ENCODE measurements at regions of chr22 and their contacts with region 1.

Region 1: GRCh38 chr22:19629720-19630419 is 84.4 kb upstream of the SEPTIN5 start:
- H3K4me3 Mint-ChIP-seq: no peak overlapping the region
- H3K27ac Mint-ChIP-seq: no peak overlapping the region
- H3K4me1 Mint-ChIP-seq: peaks cover 5% of the 10 kb centered on the region
- H3K27me3 Mint-ChIP-seq: peaks cover 8% of the 10 kb centered on the region

Region 2: DNA sequence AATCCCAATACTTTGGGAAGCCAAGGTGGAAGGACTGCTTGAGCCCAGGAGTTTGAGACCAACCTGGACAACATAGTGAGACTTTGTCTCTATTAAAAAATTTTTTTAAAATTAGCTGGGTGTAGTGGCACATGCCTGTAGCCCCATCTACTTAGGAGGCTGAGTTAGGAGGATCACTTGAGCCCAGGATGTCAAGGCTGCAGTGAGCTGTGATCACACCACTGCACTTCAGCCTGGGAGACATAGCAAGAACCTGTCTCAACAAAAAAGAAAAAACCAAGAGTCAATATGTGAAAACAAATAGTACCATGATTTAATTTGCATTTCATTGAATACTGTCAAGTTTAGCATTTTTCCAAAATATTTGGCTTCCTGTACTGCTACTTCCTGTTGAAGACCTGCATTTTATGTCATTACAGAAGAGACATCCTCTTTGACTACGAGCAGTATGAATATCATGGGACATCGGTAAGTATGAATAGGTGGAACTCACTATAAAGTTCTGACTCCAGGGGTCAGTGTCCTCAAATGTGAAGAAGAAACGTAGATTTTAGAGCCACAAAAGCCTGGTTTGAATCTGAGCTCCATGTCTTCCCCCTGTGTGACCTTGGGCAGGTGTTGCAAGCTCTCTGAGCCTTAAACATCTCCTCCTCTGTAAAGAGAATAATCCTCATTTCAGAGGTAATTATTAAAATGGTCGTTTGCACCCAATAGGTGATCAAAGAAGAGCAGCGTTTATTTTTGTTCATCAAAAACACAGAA is 134.1 kb before region 1 on chr22:
- intact Hi-C with region 1: loop called (anchors 10 kb)
- H3K4me3 Mint-ChIP-seq: no peak overlapping the region
- H3K27ac Mint-ChIP-seq: no peak overlapping the region
- H3K4me1 Mint-ChIP-seq: no peaks in the 10 kb centered on the region
- H3K27me3 Mint-ChIP-seq: no peaks in the 10 kb centered on the region

Region 3: GRCh38 chr22:19607192-19608002 is 22.5 kb before region 1 on chr22:
- intact Hi-C with region 1: no loop called
- H3K4me3 Mint-ChIP-seq: no peak overlapping the region
- H3K27ac Mint-ChIP-seq: no peak overlapping the region
- H3K4me1 Mint-ChIP-seq: no peaks in the 10 kb centered on the region
- H3K27me3 Mint-ChIP-seq: peaks cover 22% of the 10 kb centered on the region

Region 4: DNA sequence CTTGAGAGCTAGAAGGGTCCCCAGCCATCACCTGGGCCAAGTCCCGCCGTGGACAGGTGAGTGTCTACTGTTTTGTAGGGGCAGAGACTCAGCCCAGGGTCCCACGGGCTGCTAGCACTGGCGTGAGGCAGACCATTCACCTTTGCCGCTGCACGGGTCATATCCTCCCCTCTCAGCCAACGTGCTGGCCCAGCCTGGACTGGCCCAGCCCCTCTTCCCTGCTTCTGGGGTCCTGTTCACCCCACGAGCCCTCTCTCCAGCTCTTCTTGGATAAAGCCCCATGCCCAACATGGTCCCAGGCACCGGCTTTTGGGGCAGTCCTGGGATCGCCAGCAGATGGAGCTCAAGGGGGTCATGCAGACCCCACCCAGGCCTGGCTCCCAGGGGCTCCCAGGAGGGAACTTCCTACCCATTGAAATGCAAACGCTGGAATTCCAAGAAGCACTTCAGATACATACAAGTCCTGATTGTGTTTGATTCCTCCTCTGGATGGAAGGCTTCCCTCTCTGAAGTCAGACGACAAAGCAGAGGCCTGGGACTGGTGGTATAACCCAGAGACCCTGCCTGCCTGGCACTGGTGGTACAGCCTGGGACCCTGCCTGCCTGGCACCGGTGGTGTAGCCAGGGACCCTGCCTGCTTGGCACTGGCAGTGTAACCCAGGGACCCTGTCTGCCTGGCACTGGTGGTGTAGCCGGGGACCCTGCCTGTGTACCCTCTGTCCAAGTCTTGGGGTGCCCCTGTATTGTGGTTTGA is 75.5 kb after region 1 on chr22:
- intact Hi-C with region 1: no loop called
- H3K4me3 Mint-ChIP-seq: no peak overlapping the region
- H3K27ac Mint-ChIP-seq: no peak overlapping the region
- H3K4me1 Mint-ChIP-seq: no peaks in the 10 kb centered on the region
- H3K27me3 Mint-ChIP-seq: peaks cover 7% of the 10 kb centered on the region